Activated CD8-positive, alpha-beta T cell treated with anti-CD3 and anti-CD28 coated beads for 36 hours (primary cell): ENCODE measurements at regions of chr16 and their contacts with region 1.

Region 1: DNA sequence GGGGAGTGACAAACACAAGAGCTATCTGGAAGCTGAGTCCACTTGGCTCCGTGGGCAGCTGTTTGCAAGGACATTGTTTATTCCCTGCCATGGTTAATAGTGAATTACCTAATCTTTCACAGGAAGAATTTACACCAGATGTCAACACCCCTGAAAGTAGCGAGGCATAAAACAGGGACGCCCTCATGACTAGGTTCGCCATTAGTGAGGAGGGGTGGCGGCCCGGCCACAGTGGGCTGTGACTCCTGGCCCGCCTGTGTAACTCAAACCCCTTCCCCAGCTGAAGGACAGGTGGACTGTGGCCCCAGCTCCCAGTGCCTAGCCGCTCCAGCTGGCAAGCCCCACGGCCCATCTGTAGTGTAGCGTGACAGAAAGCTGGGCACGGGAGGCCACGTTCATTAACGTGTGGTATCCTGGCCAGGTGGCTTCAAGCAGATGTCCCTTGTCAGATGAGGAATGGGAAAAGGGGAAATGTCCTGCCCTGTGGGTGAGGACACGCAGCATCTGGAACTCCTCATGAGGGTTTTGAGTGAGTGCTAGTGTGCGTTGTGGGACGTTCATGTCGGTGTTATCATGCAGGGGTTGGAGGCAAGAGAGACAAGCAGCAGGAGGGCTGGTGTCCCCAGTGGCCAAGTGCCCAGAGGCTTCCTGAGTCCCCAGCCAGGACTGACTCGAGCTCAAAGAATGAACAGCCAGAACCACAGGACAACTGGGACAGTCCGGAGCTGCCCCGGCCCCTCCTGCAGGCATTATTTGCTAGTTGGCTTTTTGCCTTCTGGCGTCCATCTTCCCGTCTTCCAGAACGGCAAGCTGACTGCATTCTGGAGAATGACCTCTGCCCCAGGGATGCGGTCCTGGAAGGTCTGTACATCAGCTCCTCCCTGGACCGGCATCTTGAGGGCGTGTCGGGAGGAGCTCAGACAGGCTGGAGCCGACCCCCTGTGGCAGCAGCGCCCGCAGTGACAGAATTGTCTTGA is 19.2 kb downstream of the KDM8 start:
- DNase-seq: no peak
- ATAC-seq: no peak
- H3K4me3 Mint-ChIP-seq: no peak overlapping the region
- H3K27ac Mint-ChIP-seq: peak overlapping the region; percentile 42
- H3K4me1 Mint-ChIP-seq: peaks cover 20% of the 10 kb centered on the region
- H3K27me3 Mint-ChIP-seq: no peaks in the 10 kb centered on the region
- CTCF ChIP-seq: no peak

Region 2: DNA sequence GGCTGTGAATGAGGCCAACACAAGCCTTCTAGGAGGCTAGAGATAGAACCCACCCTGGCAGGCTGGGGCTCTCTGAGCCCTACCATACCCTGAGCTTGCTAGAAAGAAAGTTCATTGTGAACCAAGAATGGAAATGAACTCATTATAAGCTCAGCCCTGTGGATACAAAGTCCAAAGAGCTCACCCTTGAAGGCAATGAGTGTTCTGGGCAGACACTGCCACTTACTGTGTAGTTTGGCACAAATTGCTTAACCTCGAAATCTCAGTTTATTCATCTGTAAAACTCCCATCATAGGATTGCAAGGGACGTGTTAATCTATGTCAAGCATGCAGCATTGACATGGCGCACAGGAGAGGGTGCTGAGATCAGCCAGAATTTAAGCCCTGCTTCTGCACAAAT is 13.7 kb before region 1 on chr16:
- CTCF ChIA-PET with region 1: interaction called, 5 read pairs
- POLR2A ChIA-PET with region 1: interaction called, 10 read pairs
- intact Hi-C with region 1: no loop called
- DNase-seq: no peak
- ATAC-seq: no peak
- H3K4me3 Mint-ChIP-seq: no peak overlapping the region
- H3K27ac Mint-ChIP-seq: no peak overlapping the region
- H3K4me1 Mint-ChIP-seq: peaks cover 16% of the 10 kb centered on the region
- H3K27me3 Mint-ChIP-seq: no peaks in the 10 kb centered on the region
- CTCF ChIP-seq: no peak